T-cell (primary cell): ENCODE measurements at regions of chr5 and their contacts with region 1.

Region 1: DNA sequence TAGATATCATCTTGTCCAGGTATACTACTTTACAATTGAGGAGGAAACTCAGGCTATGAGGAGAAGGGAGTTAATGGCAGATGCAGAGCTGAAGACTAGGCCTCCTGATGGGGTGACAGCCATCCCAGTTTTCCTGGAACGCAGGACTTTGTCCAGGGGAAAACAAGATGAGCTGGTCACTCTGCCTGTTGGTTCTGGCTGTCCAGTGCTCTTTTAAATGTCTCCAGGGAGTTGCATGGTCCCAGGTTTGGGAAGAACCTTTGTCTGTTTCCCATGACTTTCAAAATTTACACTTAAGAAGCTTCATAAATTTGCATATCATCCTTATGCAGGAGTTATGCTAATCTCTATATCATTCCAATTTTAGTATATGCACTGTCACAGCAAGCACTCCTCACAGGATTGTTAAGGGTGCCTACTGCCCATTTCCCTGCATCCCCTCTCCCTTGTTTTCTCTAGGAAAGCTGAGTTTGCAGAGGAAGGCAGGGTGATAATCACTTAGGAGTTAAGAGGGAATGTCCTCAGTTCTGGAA is 14.7 kb upstream of the WNT8A start:
- DNase-seq: no peak
- ATAC-seq: no peak
- H3K4me3 ChIP-seq: no peak overlapping the region
- H3K4me3 Mint-ChIP-seq: no peak overlapping the region
- H3K27ac ChIP-seq: no peak overlapping the region
- H3K27ac Mint-ChIP-seq: no peak overlapping the region
- H3K4me1 ChIP-seq: no peaks in the 10 kb centered on the region
- H3K4me1 Mint-ChIP-seq: peaks cover 3 to 9% (median 6%) of the 10 kb centered on the region in 3 donors
- H3K27me3 ChIP-seq: peaks cover 0 to 6% of the 10 kb centered on the region in 2 experiments
- H3K27me3 Mint-ChIP-seq: peaks cover 0 to 2% of the 10 kb centered on the region in 2 donors

Region 2: DNA sequence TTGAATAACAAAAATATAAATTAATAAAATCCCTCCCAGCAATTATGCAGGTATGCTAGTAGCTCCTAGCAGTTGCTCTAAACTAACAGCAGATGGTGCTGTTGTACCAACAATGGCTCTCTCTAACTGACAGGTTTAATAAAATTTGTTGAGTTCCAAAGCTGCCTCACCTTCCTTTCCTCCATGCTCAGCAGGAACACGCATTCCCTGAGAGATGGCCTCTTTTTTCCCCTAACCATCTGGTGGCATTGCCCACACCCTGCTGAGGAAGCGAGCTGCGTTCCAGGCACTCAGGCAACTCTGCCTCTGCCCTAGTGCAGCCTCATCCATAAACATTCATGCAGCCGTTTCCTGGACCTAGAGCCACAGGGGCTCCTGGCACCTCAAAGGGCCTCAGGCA is 439.5 kb before region 1 on chr5:
- CTCF ChIA-PET with region 1: interaction called, 5 to 14 read pairs
- POLR2A ChIA-PET with region 1: no interaction called
- DNase-seq: peak in 14 of 35 experiments; percentile 2 to 74 (median 19)
- ATAC-seq: peak; percentile 67 to 78 (median 78)
- H3K4me3 ChIP-seq: no peak overlapping the region
- H3K4me3 Mint-ChIP-seq: no peak overlapping the region
- H3K27ac ChIP-seq: no peak overlapping the region
- H3K27ac Mint-ChIP-seq: no peak overlapping the region
- H3K4me1 ChIP-seq: no peaks in the 10 kb centered on the region
- H3K4me1 Mint-ChIP-seq: peaks cover 0 to 5% (median 0%) of the 10 kb centered on the region in 3 donors
- H3K27me3 ChIP-seq: no peaks in the 10 kb centered on the region
- H3K27me3 Mint-ChIP-seq: no peaks in the 10 kb centered on the region

Region 3: DNA sequence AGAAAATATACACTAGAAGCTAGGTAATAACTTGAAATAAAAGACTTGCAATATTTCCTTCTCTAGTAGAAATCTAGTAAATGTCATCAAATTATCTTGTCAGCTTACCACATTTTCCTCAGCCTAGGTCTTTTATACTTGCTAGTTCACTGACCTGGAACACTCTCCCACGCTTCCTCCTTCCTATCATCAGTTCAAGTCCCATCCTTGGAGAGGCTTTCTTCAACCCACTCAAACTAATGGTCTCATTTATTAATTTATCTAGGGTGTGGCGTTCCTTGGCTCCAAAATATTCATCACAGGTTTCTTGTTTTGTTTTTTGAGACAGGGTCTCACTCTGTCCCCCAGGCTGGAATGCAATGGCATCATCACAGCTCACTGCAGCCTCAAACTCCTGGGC is 39.2 kb before region 1 on chr5:
- CTCF ChIA-PET with region 1: interaction called, 9 to 14 read pairs
- POLR2A ChIA-PET with region 1: interaction called in 1 of 2 experiments, 11 read pairs
- DNase-seq: no peak
- ATAC-seq: no peak
- H3K4me3 ChIP-seq: no peak overlapping the region
- H3K4me3 Mint-ChIP-seq: peak overlapping the region in 2 of 3 donors; percentile 25 to 99
- H3K27ac ChIP-seq: no peak overlapping the region
- H3K27ac Mint-ChIP-seq: peak overlapping the region in 1 of 2 donors; percentile 45
- H3K4me1 ChIP-seq: peaks cover 16 to 49% of the 10 kb centered on the region in 2 experiments
- H3K4me1 Mint-ChIP-seq: peaks cover 71 to 79% (median 75%) of the 10 kb centered on the region in 3 donors
- H3K27me3 ChIP-seq: no peaks in the 10 kb centered on the region
- H3K27me3 Mint-ChIP-seq: no peaks in the 10 kb centered on the region

Region 4: DNA sequence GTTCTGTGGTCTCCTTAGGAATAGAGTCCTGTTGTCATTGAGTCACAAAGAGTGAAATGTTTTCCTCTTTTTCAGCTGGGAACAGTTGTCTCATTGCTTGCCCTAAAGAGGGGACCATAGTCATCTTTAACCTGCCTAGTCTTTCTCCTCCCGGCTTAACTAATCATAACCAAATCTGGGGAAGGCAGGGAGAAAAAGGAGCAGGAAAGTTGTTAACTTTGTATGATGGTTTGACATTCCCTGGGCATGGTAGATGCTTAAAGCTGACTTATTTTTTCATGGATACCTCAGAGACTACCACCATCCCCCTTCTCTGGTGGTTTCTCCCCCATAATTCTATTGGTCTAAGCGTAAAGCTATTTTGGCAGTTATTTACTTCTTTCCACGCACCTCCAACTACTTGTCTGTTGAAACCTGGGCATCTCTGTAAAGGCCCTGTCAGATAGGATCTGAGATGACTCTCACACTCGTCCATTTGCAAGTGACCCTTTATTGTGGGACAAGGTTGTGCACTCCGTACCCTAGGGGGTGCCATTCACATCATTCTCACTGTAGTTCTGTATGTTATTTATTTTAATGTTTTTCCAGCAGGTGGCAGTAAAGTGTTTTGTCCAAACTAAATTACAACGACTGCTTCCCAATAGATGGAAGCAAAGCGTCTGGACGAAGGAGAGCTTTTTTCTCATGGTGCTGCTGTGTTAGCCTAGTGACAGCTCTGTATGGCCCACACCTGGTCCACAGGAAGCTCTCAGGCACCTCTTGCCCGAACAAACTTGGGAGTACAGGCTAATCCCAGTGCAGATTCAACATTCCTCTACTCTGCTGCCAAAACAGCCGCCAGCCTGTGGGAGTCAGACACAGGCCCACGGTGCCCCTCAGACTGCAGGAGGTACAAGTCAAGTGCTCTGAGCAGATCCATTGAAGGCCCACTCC is 33.3 kb before region 1 on chr5:
- CTCF ChIA-PET with region 1: interaction called, 14 to 19 read pairs
- POLR2A ChIA-PET with region 1: interaction called in 1 of 2 experiments, 7 read pairs
- DNase-seq: peak; percentile 15 to 87 (median 56)
- ATAC-seq: peak; percentile 39 to 53 (median 48)
- H3K4me3 ChIP-seq: no peak overlapping the region
- H3K4me3 Mint-ChIP-seq: peak overlapping the region in 1 of 3 donors; percentile 39
- H3K27ac ChIP-seq: no peak overlapping the region
- H3K27ac Mint-ChIP-seq: peak overlapping the region in 1 of 2 donors; percentile 7
- H3K4me1 ChIP-seq: peaks cover 8 to 18% of the 10 kb centered on the region in 2 experiments
- H3K4me1 Mint-ChIP-seq: peaks cover 24 to 31% (median 30%) of the 10 kb centered on the region in 3 donors
- H3K27me3 ChIP-seq: no peaks in the 10 kb centered on the region
- H3K27me3 Mint-ChIP-seq: no peaks in the 10 kb centered on the region